Activated naive CD4-positive, alpha-beta T cell treated with anti-CD3 and anti-CD28 coated beads for 36 hours (primary cell): ENCODE measurements at regions of chrX and their contacts with region 1.

Region 1: GRCh38 chrX:51743179-51743957 is at the start of gene GSPT2:
- DNase-seq: peak; percentile 82
- H3K4me3 Mint-ChIP-seq: peak within 1 kb of the TSS; percentile 81
- H3K27ac Mint-ChIP-seq: peak within 1 kb of the TSS; percentile 36
- H3K4me1 Mint-ChIP-seq: peaks cover 17% of the 10 kb centered on the region
- H3K27me3 Mint-ChIP-seq: no peaks in the 10 kb centered on the region
- total RNA-seq, gene GSPT2: 6.9 to 7.2 TPM

Region 2: GRCh38 chrX:50913520-50913919 is 829.8 kb before region 1 on chrX:
- CTCF ChIA-PET with region 1: no interaction called
- intact Hi-C with region 1: no loop called
- DNase-seq: no peak
- H3K4me3 Mint-ChIP-seq: no peak overlapping the region
- H3K27ac Mint-ChIP-seq: no peak overlapping the region
- H3K4me1 Mint-ChIP-seq: no peaks in the 10 kb centered on the region
- H3K27me3 Mint-ChIP-seq: no peaks in the 10 kb centered on the region

Region 3: GRCh38 chrX:51802917-51803688 is 59.7 kb after region 1 on chrX:
- CTCF ChIA-PET with region 1: no interaction called
- intact Hi-C with region 1: loop called (anchors 1 kb)
- DNase-seq: peak; percentile 70
- H3K4me3 Mint-ChIP-seq: peak overlapping the region; percentile 98
- H3K27ac Mint-ChIP-seq: peak overlapping the region; percentile 97
- H3K4me1 Mint-ChIP-seq: peaks cover 21% of the 10 kb centered on the region
- H3K27me3 Mint-ChIP-seq: no peaks in the 10 kb centered on the region